Astrocyte of the cerebellum (primary cell): ENCODE measurements at regions of chr1 and their contacts with region 1.

Region 1: GRCh38 chr1:214224611-214225354 is 56.2 kb upstream of the SMYD2 start:
- DNase-seq: no peak
- H3K4me3 ChIP-seq: peak overlapping the region; percentile 21
- CTCF ChIP-seq: no peak

Region 2: DNA sequence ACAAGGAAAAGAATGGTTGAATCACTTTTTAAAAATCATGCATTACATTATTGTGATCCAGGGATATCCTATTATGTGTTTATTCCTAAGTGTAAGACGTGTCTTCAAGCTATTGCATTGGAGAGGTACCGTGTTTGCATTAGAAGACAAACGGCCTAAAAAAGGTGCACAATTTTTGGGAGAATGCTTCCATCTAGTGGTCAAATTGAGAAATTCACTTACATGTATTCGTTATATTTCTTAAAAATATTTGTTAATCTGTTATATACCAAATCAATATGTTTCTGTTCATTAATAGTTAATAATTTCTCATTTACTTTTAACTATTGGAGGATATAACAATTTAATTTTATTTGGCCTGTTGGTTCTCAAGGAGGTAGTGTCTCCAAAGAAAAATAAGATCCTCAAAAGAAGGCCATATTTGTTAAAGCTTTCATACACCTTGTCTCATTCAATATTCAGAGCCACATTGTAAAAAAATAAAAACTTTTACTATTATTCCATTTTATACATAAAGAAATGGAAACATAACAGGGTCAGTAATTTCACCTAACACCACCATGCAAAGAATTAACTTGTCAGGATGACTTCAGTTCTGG is 1301.9 kb after region 1 on chr1:
- in situ Hi-C with region 1: loop called (anchors 25 kb)
- DNase-seq: peak; percentile 55
- H3K4me3 ChIP-seq: no peak overlapping the region
- CTCF ChIP-seq: peak; percentile 28